CD8-positive, alpha-beta memory T cell (primary cell): ENCODE measurements at regions of chr10 and their contacts with region 1.

Region 1: DNA sequence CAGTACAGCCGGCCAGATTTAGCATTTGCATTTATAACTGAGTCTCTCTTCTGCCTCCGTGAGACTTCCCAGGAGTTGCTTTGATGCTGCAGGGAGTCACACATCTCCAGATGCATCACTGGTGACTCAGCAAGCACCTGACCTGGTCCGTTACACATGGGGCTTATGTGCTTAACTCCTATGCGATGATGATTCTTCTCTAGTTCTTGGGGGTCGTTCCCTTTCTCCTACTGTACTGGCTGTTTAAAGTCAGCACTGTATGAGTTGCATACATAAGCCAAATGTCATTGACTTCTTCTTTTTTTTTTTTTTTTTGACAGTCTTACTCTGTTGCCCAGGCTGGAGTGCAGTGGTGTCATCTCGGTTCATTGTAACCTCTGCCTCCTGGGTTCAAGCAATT is 13.0 kb upstream of the AKR1E2 start:
- DNase-seq: no peak
- H3K4me3 ChIP-seq: no peak overlapping the region
- H3K4me3 Mint-ChIP-seq: no peak overlapping the region
- H3K27ac ChIP-seq: no peak overlapping the region
- H3K27ac Mint-ChIP-seq: no peak overlapping the region
- H3K4me1 ChIP-seq: peaks cover 5% of the 10 kb centered on the region
- H3K4me1 Mint-ChIP-seq: no peaks in the 10 kb centered on the region
- H3K27me3 ChIP-seq: no peaks in the 10 kb centered on the region
- H3K27me3 Mint-ChIP-seq: peaks cover 5 to 43% of the 10 kb centered on the region in 2 donors

Region 2: GRCh38 chr10:4501306-4501705 is 311.7 kb before region 1 on chr10:
- CTCF ChIA-PET with region 1: no interaction called
- POLR2A ChIA-PET with region 1: no interaction called
- DNase-seq: no peak
- H3K4me3 ChIP-seq: no peak overlapping the region
- H3K4me3 Mint-ChIP-seq: no peak overlapping the region
- H3K27ac ChIP-seq: no peak overlapping the region
- H3K27ac Mint-ChIP-seq: peak overlapping the region in 1 of 8 donors; percentile 26
- H3K4me1 ChIP-seq: no peaks in the 10 kb centered on the region
- H3K4me1 Mint-ChIP-seq: no peaks in the 10 kb centered on the region
- H3K27me3 ChIP-seq: no peaks in the 10 kb centered on the region
- H3K27me3 Mint-ChIP-seq: no peaks in the 10 kb centered on the region

Region 3: DNA sequence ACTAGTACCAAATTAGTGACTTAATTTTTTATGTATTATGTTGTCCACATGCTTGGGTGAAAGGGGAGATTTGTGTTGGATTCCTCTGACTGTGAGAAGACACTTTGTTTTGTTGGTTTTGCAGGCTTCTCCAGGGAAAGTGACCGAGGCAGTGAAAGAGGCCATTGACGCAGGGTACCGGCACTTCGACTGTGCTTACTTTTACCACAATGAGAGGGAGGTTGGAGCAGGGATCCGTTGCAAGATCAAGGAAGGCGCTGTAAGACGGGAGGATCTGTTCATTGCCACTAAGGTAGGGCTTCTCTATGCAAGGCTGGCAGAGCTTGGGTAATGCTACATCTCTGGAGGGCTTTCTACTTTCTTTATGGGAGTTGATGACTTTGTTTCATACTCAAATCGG is 17.5 kb after region 1 on chr10:
- CTCF ChIA-PET with region 1: interaction called, 10 read pairs
- POLR2A ChIA-PET with region 1: no interaction called
- DNase-seq: no peak
- H3K4me3 ChIP-seq: no peak overlapping the region
- H3K4me3 Mint-ChIP-seq: no peak overlapping the region
- H3K27ac ChIP-seq: no peak overlapping the region
- H3K27ac Mint-ChIP-seq: no peak overlapping the region
- H3K4me1 ChIP-seq: peaks cover 14% of the 10 kb centered on the region
- H3K4me1 Mint-ChIP-seq: peaks cover 4 to 18% (median 9%) of the 10 kb centered on the region in 3 donors
- H3K27me3 ChIP-seq: no peaks in the 10 kb centered on the region
- H3K27me3 Mint-ChIP-seq: peaks cover 13 to 69% of the 10 kb centered on the region in 2 donors